IMR-90 (cell line): ENCODE measurements at regions of chr1 and their contacts with region 1.

Region 1: DNA sequence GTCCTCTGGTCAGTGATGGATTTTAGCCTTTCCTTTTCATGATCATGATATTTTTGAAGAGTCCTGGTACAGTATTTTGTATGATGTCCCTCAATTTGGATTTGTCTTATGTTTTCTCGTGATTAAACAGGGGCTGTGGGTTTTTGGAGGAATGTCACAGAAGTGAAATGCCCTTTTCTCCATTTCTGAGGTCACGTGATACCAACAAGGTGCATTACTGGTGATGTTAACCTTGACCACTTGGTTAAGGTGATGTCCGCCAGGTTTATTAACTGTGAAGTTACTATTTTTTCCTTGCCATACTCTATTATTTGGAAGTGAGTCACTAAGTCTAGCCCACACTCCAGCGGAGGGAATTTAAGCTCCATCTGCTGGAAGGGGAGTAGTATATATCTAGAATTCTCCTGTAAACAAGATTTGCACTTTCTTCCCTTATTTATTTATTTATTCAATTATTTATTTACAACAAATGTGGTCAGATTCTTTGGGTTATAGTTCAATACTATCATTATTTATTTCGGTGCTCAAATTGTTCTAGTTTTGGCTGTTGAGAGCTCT is 123.4 kb downstream of the HIVEP3 start:
- DNase-seq: peak; percentile 73
- ATAC-seq: peak; percentile 88
- H3K4me3 ChIP-seq: no peak overlapping the region
- H3K27ac ChIP-seq: no peak overlapping the region
- H3K4me1 ChIP-seq: no peaks in the 10 kb centered on the region; the same call in 1 of the 2 replicates
- H3K27me3 ChIP-seq: peaks cover 4% of the 10 kb centered on the region; the same call in 1 of the 2 replicates
- CTCF ChIP-seq: peak; percentile 75
- POLR2A ChIP-seq: no peak
- RAD21 ChIP-seq: peak; percentile 85

Region 2: GRCh38 chr1:41516168-41517061 is 278.9 kb before region 1 on chr1:
- CTCF ChIA-PET with region 1: interaction called, 3 read pairs
- POLR2A ChIA-PET with region 1: no interaction called
- dilution Hi-C with region 1: no loop called
- in situ Hi-C with region 1: no loop called
- intact Hi-C with region 1: loop called (anchors 5 kb)
- DNase-seq: peak; percentile 83
- ATAC-seq: peak; percentile 99
- H3K4me3 ChIP-seq: no peak overlapping the region
- H3K27ac ChIP-seq: no peak overlapping the region
- H3K4me1 ChIP-seq: peaks cover 3% of the 10 kb centered on the region; the same call in 1 of the 2 replicates
- H3K27me3 ChIP-seq: no peaks in the 10 kb centered on the region
- CTCF ChIP-seq: peak; percentile 92
- POLR2A ChIP-seq: no peak
- RAD21 ChIP-seq: peak; percentile 79